ENCODE measurements at regions of chr11 and their contacts with region 1.

Region 1: GRCh38 chr11:120801801-120802689 is 221.9 kb upstream of the TBCEL start:
- DNase-seq: peak; percentile 60
- H3K4me3 Mint-ChIP-seq: no peak overlapping the region
- H3K27ac Mint-ChIP-seq: no peak overlapping the region
- H3K4me1 Mint-ChIP-seq: no peaks in the 10 kb centered on the region
- H3K27me3 Mint-ChIP-seq: peaks cover 48% of the 10 kb centered on the region
- CTCF ChIP-seq: peak; percentile 77

Region 2: GRCh38 chr11:120682866-120683265 is 119.2 kb before region 1 on chr11:
- CTCF ChIA-PET with region 1: interaction called, 14 read pairs
- POLR2A ChIA-PET with region 1: no interaction called
- intact Hi-C with region 1: loop called (anchors 5 kb)
- DNase-seq: no peak
- H3K4me3 Mint-ChIP-seq: no peak overlapping the region
- H3K27ac Mint-ChIP-seq: no peak overlapping the region
- H3K4me1 Mint-ChIP-seq: no peaks in the 10 kb centered on the region
- H3K27me3 Mint-ChIP-seq: peaks cover 47% of the 10 kb centered on the region
- CTCF ChIP-seq: no peak

Region 3: DNA sequence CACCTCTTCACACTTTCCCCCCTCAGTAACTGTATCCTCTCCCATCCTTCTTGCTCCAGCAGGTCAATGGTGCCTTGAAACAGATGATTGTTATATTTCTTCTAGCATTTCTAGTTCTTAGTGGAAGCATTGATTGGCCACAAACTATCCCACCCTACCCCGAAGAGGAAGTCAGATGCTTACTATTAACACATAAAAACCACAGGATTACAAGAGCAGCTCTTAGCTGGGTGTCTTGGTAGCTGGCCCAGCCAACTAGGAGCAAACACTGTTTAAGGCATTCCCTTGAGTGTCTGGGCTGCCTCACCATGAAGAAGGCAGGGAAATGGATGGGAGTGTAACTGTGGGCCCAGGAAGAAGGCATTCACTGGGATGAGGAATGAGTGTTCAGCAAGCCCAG is 113.9 kb before region 1 on chr11:
- CTCF ChIA-PET with region 1: interaction called, 14 read pairs
- POLR2A ChIA-PET with region 1: no interaction called
- intact Hi-C with region 1: loop called (anchors 5 kb)
- DNase-seq: no peak
- H3K4me3 Mint-ChIP-seq: no peak overlapping the region
- H3K27ac Mint-ChIP-seq: no peak overlapping the region
- H3K4me1 Mint-ChIP-seq: no peaks in the 10 kb centered on the region
- H3K27me3 Mint-ChIP-seq: peaks cover 74% of the 10 kb centered on the region
- CTCF ChIP-seq: no peak

Region 4: DNA sequence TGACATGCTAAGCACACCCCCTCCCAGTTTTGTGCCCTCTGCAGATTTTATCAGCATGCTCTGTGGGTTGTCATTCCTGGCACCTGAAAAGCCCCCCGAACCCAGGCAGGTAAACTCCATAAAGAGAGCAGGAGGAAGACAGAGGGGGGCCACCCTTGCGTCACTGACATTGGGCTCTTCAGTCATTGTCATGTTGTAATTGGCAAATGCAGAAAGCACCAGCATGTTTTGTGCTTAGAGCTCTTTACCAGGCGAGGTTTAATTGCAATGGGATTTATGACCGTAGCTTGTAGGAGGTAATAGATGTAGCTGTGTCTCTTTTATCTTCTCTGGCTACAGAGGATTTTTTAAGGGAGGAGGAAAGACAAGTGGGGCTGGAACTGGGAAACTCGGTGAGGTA is 88.7 kb before region 1 on chr11:
- CTCF ChIA-PET with region 1: interaction called, 10 read pairs
- POLR2A ChIA-PET with region 1: no interaction called
- intact Hi-C with region 1: no loop called
- DNase-seq: no peak
- H3K4me3 Mint-ChIP-seq: no peak overlapping the region
- H3K27ac Mint-ChIP-seq: no peak overlapping the region
- H3K4me1 Mint-ChIP-seq: peaks cover 6% of the 10 kb centered on the region
- H3K27me3 Mint-ChIP-seq: peaks cover 8% of the 10 kb centered on the region
- CTCF ChIP-seq: no peak

Region 5: GRCh38 chr11:120952461-120953434 is 150.7 kb after region 1 on chr11:
- CTCF ChIA-PET with region 1: interaction called, 10 read pairs
- POLR2A ChIA-PET with region 1: no interaction called
- intact Hi-C with region 1: no loop called
- DNase-seq: peak; percentile 81
- H3K4me3 Mint-ChIP-seq: peak overlapping the region; percentile 49
- H3K27ac Mint-ChIP-seq: no peak overlapping the region
- H3K4me1 Mint-ChIP-seq: peaks cover 6% of the 10 kb centered on the region
- H3K27me3 Mint-ChIP-seq: peaks cover 54% of the 10 kb centered on the region
- CTCF ChIP-seq: peak; percentile 76

Region 6: GRCh38 chr11:121112498-121113455 is 310.7 kb after region 1 on chr11:
- CTCF ChIA-PET with region 1: no interaction called
- POLR2A ChIA-PET with region 1: no interaction called
- intact Hi-C with region 1: loop called (anchors 10 kb)
- DNase-seq: peak; percentile 59
- H3K4me3 Mint-ChIP-seq: no peak overlapping the region
- H3K27ac Mint-ChIP-seq: no peak overlapping the region
- H3K4me1 Mint-ChIP-seq: no peaks in the 10 kb centered on the region
- H3K27me3 Mint-ChIP-seq: peaks cover 50% of the 10 kb centered on the region
- CTCF ChIP-seq: peak; percentile 48